Tibial artery (tissue), 4 donors: ENCODE measurements at regions of chr6 and their contacts with region 1.

Region 1: GRCh38 chr6:31087494-31088089 is 24.8 kb downstream of the C6orf15 start:
- DNase-seq: peak; percentile 85 to 87
- H3K4me3 ChIP-seq: no peak overlapping the region
- H3K27ac ChIP-seq: no peak overlapping the region
- H3K4me1 ChIP-seq: peaks cover 0 to 21% (median 5%) of the 10 kb centered on the region in 4 donors
- H3K27me3 ChIP-seq: no peaks in the 10 kb centered on the region
- CTCF ChIP-seq: peak; percentile 70 to 80

Region 2: DNA sequence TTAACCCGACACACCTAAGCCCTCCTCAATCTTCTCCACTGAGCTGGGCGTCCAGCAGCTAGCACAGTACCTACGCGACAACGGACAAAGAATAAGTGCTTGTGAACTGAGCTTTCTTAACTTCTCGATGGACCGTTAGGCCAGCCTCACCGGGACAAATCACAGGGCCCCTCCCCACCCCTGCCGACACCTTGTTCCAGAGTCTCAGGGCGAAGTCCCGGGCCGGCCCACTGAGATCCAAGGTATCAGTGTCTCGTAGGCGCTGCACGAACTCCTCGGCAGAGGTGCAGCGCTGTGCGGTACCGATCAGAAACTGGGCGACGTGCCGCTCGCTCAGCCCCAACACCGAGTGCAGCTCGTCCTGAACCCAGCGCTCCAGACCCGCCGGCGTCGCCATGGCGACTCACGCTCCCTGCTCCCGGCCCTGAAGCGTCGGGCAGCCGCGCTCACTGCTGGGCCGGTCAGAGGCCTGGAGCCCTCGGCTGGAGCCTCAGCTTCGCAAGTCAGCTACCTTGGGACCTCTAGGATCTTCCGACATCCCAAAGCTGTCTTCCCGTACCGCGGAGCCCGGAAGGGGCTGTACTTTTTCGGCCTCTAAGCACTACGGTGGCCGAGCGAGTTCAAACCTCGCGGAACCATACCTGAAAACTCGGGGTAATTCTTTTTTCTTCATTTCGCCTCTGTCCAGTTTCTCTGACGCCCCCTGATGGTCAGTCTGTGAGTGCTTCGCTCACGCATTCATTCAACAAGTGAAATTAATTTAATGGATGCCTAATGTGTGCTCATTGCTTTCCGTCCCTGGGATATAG is 414.9 kb before region 1 on chr6 and contains the start of gene DHX16:
- intact Hi-C with region 1: loop called (anchors 10 kb)
- DNase-seq: peak; percentile 98
- H3K4me3 ChIP-seq: peak within 1 kb of the TSS; percentile 85
- H3K27ac ChIP-seq: peak within 1 kb of the TSS; percentile 67 to 77
- H3K4me1 ChIP-seq: peaks cover 0 to 18% (median 12%) of the 10 kb centered on the region in 4 donors
- H3K27me3 ChIP-seq: no peaks in the 10 kb centered on the region
- CTCF ChIP-seq: peak; percentile 81 to 85

Region 3: DNA sequence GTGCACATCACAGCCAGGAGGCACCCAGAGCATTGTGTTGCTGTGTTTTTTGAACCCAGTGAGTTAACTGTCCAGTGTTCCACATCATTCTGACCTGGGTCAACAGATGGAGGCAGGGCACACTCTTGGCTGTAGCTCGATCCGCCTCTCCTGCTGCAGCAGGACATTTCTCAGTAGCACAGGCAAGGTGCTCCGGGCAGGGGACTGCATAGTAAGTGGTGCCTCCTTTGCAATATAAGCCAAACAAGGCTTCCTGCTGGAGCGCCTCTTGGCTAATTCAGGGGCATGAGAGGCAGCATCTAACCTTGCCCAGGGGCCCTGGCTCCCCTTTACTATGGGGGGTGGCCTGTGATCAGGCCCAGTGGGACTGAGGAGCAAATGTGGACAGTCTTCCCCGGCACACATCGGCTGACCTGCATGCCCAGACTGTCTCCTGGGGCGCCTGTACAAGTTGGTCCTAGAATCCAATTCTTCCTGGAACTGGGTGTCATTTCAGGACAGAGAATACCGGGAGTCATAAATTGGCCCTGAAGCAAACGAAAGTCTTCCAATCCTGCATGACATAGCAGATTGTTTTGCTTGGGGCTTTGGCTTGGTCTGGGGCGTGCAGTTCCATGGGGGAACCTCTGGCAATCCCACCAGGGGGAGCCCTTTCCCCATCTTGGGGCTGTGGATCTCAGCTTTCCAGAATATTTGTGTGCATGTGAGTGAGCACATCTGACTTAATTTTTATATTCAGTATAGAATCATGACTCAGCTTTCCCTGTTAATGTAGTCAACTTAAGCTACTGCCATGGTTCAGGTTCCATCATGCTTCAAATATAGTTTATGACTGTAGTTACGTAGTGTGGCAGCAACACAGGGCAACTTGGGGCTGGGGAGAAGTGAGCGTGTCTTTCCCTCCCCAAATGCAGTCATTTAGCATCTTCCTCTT is 259.3 kb before region 1 on chr6:
- intact Hi-C with region 1: loop called (anchors 5 kb)
- DNase-seq: peak; percentile 90 to 96
- H3K4me3 ChIP-seq: peak overlapping the region; percentile 1 to 12
- H3K27ac ChIP-seq: peak overlapping the region; percentile 48 to 64
- H3K4me1 ChIP-seq: peaks cover 0 to 30% (median 19%) of the 10 kb centered on the region in 4 donors
- H3K27me3 ChIP-seq: no peaks in the 10 kb centered on the region
- CTCF ChIP-seq: peak; percentile 91 to 96

Region 4: DNA sequence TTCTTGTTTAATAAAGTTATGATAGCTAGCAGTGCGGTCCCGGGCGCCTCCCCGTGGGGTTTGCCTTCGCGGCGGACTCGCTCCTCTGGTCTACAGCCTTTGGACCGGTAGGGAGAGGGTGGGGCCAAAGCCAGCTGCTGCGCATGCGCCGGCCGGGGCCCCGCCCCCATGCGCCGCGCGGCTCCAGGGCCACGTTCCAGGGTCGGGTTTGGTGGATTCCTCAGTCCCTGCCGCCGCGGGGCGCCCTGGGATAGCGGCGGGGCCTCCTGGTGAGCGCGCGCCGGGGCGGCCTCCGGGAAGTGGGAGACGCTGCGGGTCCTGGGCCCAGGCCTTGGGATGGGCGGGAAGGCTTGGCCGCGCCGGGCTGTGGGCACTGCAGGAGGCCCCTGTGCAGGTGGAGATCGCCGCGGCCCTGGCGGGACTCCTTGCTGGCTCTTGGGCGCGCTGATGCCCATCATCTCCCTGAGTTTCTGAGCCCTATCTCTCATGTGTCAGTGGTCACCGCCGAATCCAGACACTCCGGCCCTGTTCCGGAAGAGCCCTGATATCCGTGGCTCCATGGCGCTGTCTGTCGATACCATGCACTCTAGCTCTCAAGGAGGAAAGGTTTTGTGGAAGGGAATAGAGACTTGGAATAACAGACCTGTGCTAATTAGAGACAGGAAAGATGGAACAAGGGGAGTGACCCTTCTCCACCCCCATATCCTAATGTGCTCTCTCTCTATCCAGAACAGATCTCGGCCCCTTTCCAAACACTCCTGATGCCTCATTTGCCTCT is 173.3 kb before region 1 on chr6 and contains the start of gene VARS2:
- intact Hi-C with region 1: loop called (anchors 2 kb)
- DNase-seq: peak; percentile 90 to 97
- H3K4me3 ChIP-seq: peak within 1 kb of the TSS; percentile 53 to 63
- H3K27ac ChIP-seq: peak within 1 kb of the TSS; percentile 85 to 87
- H3K4me1 ChIP-seq: peaks cover 0 to 38% (median 25%) of the 10 kb centered on the region in 4 donors
- H3K27me3 ChIP-seq: no peaks in the 10 kb centered on the region
- CTCF ChIP-seq: peak; percentile 33 to 43

Region 5: GRCh38 chr6:31016659-31017299 is 70.8 kb before region 1 on chr6:
- intact Hi-C with region 1: no loop called
- DNase-seq: no peak
- H3K4me3 ChIP-seq: no peak overlapping the region
- H3K27ac ChIP-seq: no peak overlapping the region
- H3K4me1 ChIP-seq: no peaks in the 10 kb centered on the region
- H3K27me3 ChIP-seq: peaks cover 0 to 19% of the 10 kb centered on the region in 2 donors
- CTCF ChIP-seq: no peak